GM13976 (cell line): ENCODE measurements at regions of chr9 and their contacts with region 1.

Region 1: DNA sequence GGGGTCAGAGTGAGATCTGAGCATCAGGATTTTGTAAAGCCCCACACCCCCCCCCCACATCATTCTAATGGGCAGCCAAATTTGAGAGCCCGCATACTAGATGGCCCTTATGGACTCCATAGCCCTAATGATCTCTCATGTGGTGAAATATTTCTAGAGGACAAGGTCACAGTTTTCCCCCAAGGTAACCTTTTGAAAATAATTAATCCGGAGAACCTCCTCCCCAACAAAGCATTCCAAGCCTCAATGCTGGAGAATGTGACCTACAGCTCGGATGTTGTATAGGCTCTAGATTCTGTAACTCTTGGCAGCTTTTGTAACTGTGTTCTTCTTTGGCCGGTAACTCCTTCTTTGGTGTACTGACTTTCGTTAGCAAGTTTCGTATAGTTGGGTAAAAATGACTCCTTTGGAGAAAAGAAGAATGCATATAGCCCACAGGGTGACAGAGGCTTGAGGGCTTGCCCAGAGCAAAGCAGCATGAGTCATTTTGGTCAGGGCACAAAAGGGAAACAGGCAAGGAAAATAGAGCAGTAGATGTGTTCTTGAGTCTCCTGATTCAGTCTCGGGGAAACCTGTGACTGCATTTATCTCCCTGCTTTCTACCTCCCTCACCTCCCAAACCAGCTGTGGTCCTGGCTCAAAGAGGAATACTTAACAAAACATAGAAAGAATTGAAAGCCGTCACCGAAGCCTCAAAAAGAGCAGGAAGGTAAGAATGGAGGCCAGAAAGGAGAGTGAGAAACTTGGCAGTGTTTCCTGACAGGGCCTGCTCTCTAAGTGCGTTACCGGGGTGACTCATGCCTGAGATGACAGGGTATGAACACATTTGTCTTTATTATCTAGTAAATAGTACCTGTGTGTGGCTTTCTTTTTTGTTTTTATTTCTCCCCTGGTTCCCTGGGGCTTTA is 6.6 kb upstream of the XPA start:
- DNase-seq: no peak
- CTCF ChIP-seq: no peak

Region 2: DNA sequence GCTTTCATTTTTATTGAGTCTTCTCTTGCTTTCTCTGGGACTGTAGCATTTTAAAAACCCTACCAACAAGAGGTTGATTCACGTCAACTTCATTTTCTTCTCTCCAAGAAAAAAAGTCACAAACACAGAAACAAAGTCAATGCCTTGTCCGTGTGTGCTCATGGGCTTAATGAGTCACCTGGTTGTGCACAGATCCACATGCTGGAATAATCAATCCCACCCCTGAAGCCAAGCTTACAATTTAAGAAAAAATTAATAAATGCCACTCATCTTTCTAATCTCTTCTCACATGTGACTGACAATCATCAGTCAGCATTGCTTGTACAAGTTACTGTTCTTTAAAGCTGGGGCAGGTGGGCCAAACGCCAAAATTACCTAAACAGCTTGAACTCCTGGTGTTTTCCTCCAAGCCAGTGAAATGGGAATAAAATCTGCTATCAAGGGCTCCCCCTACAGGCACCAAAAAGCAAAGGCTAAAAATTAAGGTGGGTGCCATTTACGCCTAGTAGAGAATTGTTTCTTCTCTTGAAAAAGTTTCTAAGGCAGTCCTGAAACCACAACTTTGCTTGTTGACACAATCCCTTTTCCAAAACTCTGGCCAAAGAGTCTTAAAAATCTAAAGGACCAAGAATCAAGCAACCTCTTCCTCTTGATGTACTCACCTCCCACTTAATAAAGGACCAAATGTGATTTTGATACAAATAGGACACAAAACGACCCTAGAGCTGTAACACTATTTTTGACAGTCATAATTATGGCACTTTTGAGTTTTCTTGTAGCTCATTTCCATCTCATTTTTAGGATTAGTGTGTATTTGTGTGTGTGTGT is 197.3 kb after region 1 on chr9:
- in situ Hi-C with region 1: loop called (anchors 10 kb)
- DNase-seq: peak; percentile 65
- CTCF ChIP-seq: peak; percentile 78

Region 3: GRCh38 chr9:97938081-97938644 is 234.5 kb after region 1 on chr9 and contains the start of gene HEMGN:
- in situ Hi-C with region 1: no loop called
- DNase-seq: no peak
- CTCF ChIP-seq: no peak